Ovary (tissue), 10 donors: ENCODE measurements at regions of chr12 and their contacts with region 1.

Region 1: GRCh38 chr12:14239350-14239934 is 126.0 kb upstream of the ATF7IP start:
- DNase-seq: no peak
- H3K4me3 ChIP-seq: no peak overlapping the region
- H3K27ac ChIP-seq: no peak overlapping the region
- H3K4me1 ChIP-seq: no peaks in the 10 kb centered on the region
- H3K27me3 ChIP-seq: no peaks in the 10 kb centered on the region
- CTCF ChIP-seq: no peak
- EP300 ChIP-seq: no peak
- POLR2A ChIP-seq: no peak

Region 2: DNA sequence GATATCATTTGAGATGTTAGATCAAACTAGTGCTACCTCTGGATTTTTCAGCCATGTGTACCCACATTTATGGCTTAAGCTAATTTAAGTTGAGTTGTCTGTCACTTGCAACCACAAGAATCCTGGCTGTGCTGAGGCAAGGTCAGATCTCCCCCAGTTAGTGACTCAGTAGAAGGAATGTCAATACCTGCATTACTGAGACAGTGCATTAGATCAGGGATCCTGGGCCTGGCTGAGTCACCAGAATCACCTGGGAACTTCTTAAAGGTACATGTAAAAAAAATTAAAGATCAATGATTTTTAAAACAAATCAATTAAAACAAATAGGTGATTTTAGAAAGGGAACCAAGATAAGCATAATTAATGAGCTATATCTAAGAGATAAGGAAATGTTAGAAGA is 173.4 kb before region 1 on chr12:
- intact Hi-C with region 1: no loop called
- DNase-seq: no peak
- H3K4me3 ChIP-seq: no peak overlapping the region
- H3K27ac ChIP-seq: no peak overlapping the region
- H3K4me1 ChIP-seq: no peaks in the 10 kb centered on the region
- H3K27me3 ChIP-seq: no peaks in the 10 kb centered on the region
- CTCF ChIP-seq: no peak
- EP300 ChIP-seq: no peak
- POLR2A ChIP-seq: no peak

Region 3: GRCh38 chr12:14454098-14454907 is 214.9 kb after region 1 on chr12:
- intact Hi-C with region 1: no loop called
- DNase-seq: no peak
- H3K4me3 ChIP-seq: no peak overlapping the region
- H3K27ac ChIP-seq: no peak overlapping the region
- H3K4me1 ChIP-seq: no peaks in the 10 kb centered on the region
- H3K27me3 ChIP-seq: no peaks in the 10 kb centered on the region
- CTCF ChIP-seq: no peak
- EP300 ChIP-seq: no peak
- POLR2A ChIP-seq: no peak

Region 4: DNA sequence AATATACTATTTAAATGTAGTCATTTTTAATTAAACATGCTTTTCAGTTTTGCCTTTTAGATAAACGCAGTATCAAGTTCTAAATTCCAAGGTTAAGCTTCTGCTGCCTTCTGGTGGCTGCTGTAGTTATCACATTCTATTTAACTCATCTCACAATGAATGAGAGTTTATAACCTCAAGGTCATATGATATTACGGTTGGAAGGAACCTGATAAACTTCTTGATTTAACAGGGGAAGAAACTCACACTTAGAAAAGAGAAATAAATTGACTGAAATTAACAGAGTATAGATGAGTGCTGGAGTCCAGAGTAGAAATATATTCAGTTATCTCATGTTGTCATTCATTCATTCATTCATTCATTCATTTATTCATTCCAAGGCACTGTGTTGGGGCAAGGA is 425.1 kb after region 1 on chr12:
- intact Hi-C with region 1: loop called in 2 of 4 experiments (anchors 5 kb)
- DNase-seq: peak in 1 of 5 donors; percentile 23
- H3K4me3 ChIP-seq: no peak overlapping the region
- H3K27ac ChIP-seq: no peak overlapping the region
- H3K4me1 ChIP-seq: no peaks in the 10 kb centered on the region
- H3K27me3 ChIP-seq: no peaks in the 10 kb centered on the region
- CTCF ChIP-seq: peak in 2 of 3 donors; percentile 40 to 50
- EP300 ChIP-seq: no peak
- POLR2A ChIP-seq: no peak

Region 5: DNA sequence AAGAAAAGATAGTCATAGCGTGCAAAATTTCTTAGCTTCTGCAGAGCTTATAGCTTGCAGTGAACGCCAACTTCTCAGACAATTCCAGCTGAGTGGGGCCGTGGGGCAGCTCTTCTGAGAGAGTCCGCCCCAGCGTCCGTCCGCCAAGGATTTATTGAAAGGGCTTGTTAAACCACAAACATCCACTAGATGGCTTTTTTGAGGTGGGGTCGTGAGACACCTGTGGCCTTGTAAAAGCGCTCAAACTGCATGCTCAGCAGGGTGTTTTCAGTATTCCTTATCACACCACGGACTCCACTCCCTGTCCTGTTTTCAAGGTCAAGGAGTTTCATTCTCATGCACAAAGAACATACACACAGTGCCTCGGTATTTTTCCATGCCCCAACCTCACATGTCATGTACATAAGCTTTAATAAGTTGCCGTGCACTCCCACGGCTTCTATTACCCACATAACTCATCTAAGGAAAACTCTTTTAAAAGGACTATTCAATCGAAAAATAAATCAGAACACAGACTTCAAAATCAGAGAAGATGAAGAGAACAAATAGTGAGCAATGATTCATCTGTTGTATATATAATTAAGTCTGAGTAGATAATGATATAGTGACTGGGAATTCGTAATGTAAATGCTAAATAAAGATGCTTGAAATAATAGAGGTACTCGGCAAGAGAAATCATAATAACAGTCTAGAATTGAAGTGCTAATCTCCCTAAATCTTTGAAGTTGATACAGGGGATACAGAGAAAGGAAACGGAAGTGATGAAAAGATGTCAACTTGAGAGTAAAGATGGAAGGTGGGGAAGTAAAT is 517.1 kb after region 1 on chr12:
- intact Hi-C with region 1: loop called in 1 of 4 experiments (anchors 10 kb)
- DNase-seq: peak in 3 of 5 donors; percentile 23 to 49 (median 28)
- H3K4me3 ChIP-seq: no peak overlapping the region
- H3K27ac ChIP-seq: no peak overlapping the region
- H3K4me1 ChIP-seq: peaks cover 3% of the 10 kb centered on the region
- H3K27me3 ChIP-seq: no peaks in the 10 kb centered on the region
- CTCF ChIP-seq: no peak
- EP300 ChIP-seq: no peak
- POLR2A ChIP-seq: no peak

Region 6: DNA sequence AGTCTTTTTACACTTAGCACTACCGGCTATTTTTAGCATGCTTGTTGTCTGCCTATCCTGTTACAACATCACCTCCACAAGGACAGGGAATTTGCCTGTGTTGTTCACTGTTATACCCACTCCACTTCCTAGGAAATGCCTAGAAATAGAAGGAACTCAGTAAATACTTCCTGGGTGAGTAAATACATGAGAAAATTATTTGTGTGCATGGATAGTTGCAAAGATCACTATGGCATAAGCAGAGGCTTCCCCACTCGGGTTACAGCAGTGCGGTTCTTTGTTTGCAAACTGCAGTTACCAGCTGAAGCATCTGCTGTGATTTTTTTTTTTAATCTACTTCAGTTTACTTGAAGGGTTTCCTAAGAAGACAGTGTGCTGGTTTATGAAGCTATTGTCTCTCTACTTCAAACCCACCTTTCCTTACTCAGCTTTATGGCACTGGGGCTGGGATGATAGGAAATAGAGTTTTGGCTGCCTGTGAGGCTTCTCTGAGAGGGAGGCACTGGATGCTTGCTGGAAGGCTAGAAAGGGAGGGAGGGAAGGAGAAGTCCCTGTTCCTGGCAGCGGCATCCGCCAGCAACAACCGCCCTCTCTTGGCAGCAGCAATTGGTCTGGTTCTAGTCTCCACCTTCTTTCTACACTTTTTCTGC is 762.4 kb after region 1 on chr12:
- intact Hi-C with region 1: loop called in 1 of 4 experiments (anchors 10 kb)
- DNase-seq: peak; percentile 52 to 80 (median 63)
- H3K4me3 ChIP-seq: peak overlapping the region; percentile 2
- H3K27ac ChIP-seq: no peak overlapping the region
- H3K4me1 ChIP-seq: peaks cover 3% of the 10 kb centered on the region
- H3K27me3 ChIP-seq: no peaks in the 10 kb centered on the region
- CTCF ChIP-seq: no peak
- EP300 ChIP-seq: no peak
- POLR2A ChIP-seq: no peak